ENCODE measurements at regions of chr10 and their contacts with region 1.

Region 1: GRCh38 chr10:71033396-71033980 is 145.1 kb upstream of the PCBD1 start:
- DNase-seq: no peak
- H3K4me3 ChIP-seq: no peak overlapping the region
- H3K27ac ChIP-seq: no peak overlapping the region
- H3K4me1 ChIP-seq: peaks cover 0 to 2% (median 0%) of the 10 kb centered on the region in 4 experiments; a peak in 1 of 7 replicates
- H3K27me3 ChIP-seq: no peaks in the 10 kb centered on the region; a peak in 1 of 7 replicates
- CTCF ChIP-seq: peak; percentile 28 to 61 (median 33)
- EP300 ChIP-seq: no peak
- POLR2A ChIP-seq: no peak
- RAD21 ChIP-seq: peak in 1 of 2 experiments; percentile 42; a peak in 2 of 4 replicates

Region 2: GRCh38 chr10:71015674-71016073 is 17.8 kb before region 1 on chr10:
- CTCF ChIA-PET with region 1: interaction called, 12 read pairs
- POLR2A ChIA-PET with region 1: no interaction called
- DNase-seq: no peak
- H3K4me3 ChIP-seq: no peak overlapping the region
- H3K27ac ChIP-seq: no peak overlapping the region
- H3K4me1 ChIP-seq: no peaks in the 10 kb centered on the region
- H3K27me3 ChIP-seq: no peaks in the 10 kb centered on the region
- CTCF ChIP-seq: no peak
- EP300 ChIP-seq: no peak
- POLR2A ChIP-seq: no peak
- RAD21 ChIP-seq: no peak

Measured in H1 (cell line).